ENCODE measurements at regions of chr1 and their contacts with region 1.

Region 1: GRCh38 chr1:173202430-173203145 is 4.5 kb downstream of the TNFSF4 start:
- DNase-seq: peak; percentile 15 to 70
- ATAC-seq: peak; percentile 90
- H3K4me3 ChIP-seq: no peak overlapping the region
- H3K27ac ChIP-seq: peak overlapping the region; percentile 40 to 50; a peak in 2 of 6 replicates
- H3K4me1 ChIP-seq: peaks cover 2% of the 10 kb centered on the region; the same call in 1 of the 3 replicates
- CTCF ChIP-seq: peak; percentile 83
- EP300 ChIP-seq: no peak
- POLR2A ChIP-seq: no peak
- RAD21 ChIP-seq: peak; percentile 96

Region 2: DNA sequence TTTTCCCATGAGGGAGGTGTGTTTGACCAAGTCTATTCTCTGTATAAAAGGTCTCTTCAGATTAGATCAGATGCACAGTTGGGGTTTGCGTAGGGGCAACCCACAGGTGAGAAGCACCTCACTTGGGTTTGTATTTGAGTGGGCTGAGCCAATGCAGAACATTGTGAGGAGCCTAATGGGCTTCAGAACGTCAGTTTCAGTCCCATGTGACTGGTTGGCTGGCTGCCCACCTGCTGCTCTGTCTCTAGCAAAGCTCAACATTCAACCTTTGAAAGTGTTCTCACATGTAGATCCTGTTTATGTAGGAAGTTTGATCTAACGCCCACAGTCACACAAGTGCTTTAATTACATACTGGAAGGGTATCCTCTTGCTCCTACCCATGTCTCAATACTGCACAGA is 438.2 kb before region 1 on chr1:
- CTCF ChIA-PET with region 1: interaction called, 10 read pairs
- POLR2A ChIA-PET with region 1: no interaction called
- DNase-seq: no peak
- ATAC-seq: no peak
- H3K4me3 ChIP-seq: no peak overlapping the region
- H3K27ac ChIP-seq: no peak overlapping the region
- H3K4me1 ChIP-seq: peaks cover 3% of the 10 kb centered on the region; the same call in 1 of the 3 replicates
- CTCF ChIP-seq: no peak
- EP300 ChIP-seq: no peak
- POLR2A ChIP-seq: no peak
- RAD21 ChIP-seq: no peak

Region 3: DNA sequence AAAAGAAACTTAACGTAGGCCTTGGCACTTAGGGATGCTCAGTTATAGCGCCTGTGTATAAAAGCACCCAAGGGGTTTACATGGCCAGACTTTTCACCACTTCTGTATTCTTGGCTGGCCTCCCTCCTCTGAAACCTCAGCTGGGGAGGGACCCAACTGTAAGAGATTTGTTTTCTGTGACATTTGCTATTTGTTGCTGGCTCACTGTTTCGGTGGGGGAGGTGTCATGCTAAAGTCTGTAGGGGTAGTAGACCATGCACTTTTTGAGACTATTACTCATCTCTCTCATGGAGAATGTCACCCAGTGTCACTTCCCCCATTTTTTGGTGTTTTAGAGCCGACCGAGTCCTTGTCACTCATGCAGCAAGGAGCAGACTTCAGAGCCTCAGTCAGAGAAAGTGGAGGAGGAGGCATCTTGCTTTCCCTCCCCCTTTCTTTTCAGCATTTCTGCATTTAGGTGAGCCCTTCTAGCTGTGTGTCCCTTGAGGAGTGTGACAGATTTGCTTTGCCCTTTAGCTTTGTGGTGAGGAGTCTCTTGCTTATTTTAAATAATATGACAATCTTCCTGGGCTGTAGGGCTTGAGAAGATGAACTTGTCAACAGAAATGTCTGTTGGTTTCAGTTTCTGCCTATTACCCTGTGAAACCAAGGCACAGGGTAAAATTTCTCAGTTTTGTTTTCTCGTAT is 383.6 kb before region 1 on chr1:
- CTCF ChIA-PET with region 1: interaction called, 193 read pairs
- POLR2A ChIA-PET with region 1: no interaction called
- DNase-seq: no peak
- ATAC-seq: no peak
- H3K4me3 ChIP-seq: no peak overlapping the region
- H3K27ac ChIP-seq: no peak overlapping the region
- H3K4me1 ChIP-seq: peaks cover 8% of the 10 kb centered on the region; the same call in 1 of the 3 replicates
- CTCF ChIP-seq: no peak
- EP300 ChIP-seq: no peak
- POLR2A ChIP-seq: no peak
- RAD21 ChIP-seq: no peak

Region 4: DNA sequence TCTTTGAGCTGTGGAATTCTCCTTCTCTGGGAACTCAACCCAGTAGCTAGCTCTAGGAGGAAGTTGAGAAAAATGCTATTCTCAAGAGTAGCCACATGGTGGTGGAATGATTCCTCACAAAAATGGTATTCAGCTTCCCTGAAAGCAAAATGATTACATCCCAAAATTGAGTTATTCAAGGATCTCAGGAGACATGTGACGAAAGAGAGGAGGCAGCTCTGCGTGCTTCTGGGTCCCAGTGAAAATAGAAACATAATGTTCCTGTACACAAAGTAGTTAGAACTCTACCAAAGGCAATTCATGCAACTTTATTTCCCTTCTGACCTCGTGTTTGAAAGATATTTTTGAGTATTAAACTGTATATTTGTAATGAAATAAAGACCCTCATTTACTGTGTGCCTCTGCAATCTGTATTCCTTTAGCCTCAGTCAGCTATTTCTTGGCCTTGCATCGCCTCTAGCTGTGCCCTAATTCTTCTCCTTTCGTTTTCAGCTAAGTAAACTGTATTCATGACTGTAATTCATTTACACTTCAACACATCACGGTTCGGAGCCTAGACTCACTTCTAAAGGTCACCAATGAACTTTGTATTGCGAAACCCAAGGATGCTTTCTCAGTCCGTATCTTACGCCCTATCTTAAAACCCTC is 376.4 kb before region 1 on chr1:
- CTCF ChIA-PET with region 1: interaction called, 193 read pairs
- POLR2A ChIA-PET with region 1: interaction called, 7 read pairs
- DNase-seq: peak; percentile 44 to 75
- ATAC-seq: peak; percentile 89 to 94
- H3K4me3 ChIP-seq: no peak overlapping the region
- H3K27ac ChIP-seq: peak overlapping the region; percentile 68 to 74
- H3K4me1 ChIP-seq: peaks cover 16% of the 10 kb centered on the region
- CTCF ChIP-seq: peak; percentile 85
- EP300 ChIP-seq: no peak
- POLR2A ChIP-seq: no peak
- RAD21 ChIP-seq: peak; percentile 97

Region 5: GRCh38 chr1:173212952-173213491 is 10.4 kb after region 1 on chr1:
- CTCF ChIA-PET with region 1: interaction called, 27 read pairs
- POLR2A ChIA-PET with region 1: no interaction called
- DNase-seq: no peak
- ATAC-seq: no peak
- H3K4me3 ChIP-seq: no peak overlapping the region
- H3K27ac ChIP-seq: no peak overlapping the region
- H3K4me1 ChIP-seq: no peaks in the 10 kb centered on the region
- CTCF ChIP-seq: no peak
- EP300 ChIP-seq: no peak
- POLR2A ChIP-seq: no peak
- RAD21 ChIP-seq: no peak

Region 6: GRCh38 chr1:173234899-173235298 is 32.3 kb after region 1 on chr1:
- CTCF ChIA-PET with region 1: no interaction called
- POLR2A ChIA-PET with region 1: no interaction called
- DNase-seq: no peak
- ATAC-seq: no peak
- H3K4me3 ChIP-seq: no peak overlapping the region
- H3K27ac ChIP-seq: no peak overlapping the region
- H3K4me1 ChIP-seq: no peaks in the 10 kb centered on the region
- CTCF ChIP-seq: no peak
- EP300 ChIP-seq: no peak
- POLR2A ChIP-seq: no peak
- RAD21 ChIP-seq: no peak